CD8-positive, alpha-beta T cell (primary cell): ENCODE measurements at regions of chr10 and their contacts with region 1.

Region 1: GRCh38 chr10:119750391-119751230 is 24.8 kb downstream of the INPP5F start:
- DNase-seq: peak; percentile 6 to 74 (median 53)
- ATAC-seq: peak; percentile 95
- H3K4me3 ChIP-seq: no peak overlapping the region
- H3K4me3 Mint-ChIP-seq: no peak overlapping the region
- H3K27ac ChIP-seq: no peak overlapping the region
- H3K27ac Mint-ChIP-seq: no peak overlapping the region
- H3K4me1 ChIP-seq: no peaks in the 10 kb centered on the region
- H3K4me1 Mint-ChIP-seq: peaks cover 4% of the 10 kb centered on the region
- H3K27me3 ChIP-seq: no peaks in the 10 kb centered on the region
- H3K27me3 Mint-ChIP-seq: no peaks in the 10 kb centered on the region
- CTCF ChIP-seq: peak; percentile 77

Region 2: DNA sequence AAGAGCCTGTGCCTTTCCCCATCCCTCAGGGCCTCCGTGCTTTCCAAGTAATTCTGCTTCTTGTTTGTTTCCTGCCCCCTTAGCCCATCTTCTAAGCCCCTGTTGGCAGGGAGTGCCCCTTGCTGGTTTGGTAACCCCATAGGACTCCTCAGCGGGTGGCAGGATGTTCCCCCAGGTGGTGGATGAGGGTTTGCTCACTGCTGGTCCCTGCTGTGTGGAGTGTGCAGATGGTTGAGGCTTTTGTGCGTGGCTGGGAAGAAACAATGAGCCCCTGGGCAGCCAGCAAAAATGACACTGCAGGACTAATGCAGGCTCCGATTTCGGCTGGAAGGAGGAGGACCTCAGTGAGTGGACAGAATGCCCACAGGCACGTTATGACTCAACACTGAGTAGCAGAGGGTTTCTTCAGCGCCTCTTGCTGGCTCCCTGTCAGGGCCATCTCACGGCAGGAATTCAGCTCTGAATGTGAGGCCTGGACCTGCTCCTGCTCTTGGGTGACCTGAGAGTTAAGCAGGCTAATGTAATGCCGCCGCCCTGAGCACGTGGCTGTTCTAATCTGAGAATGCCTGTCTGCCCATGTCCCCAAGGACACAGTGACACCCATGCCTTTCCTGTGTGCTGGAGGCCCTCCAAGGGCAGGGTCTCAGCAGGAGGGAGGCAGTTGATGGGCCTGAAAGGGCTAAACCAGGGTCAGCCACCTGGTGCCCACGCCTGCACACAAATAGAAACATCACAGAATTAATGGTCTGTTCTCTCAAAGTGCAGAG is 82.9 kb before region 1 on chr10:
- CTCF ChIA-PET with region 1: no interaction called
- POLR2A ChIA-PET with region 1: no interaction called
- intact Hi-C with region 1: no loop called
- DNase-seq: peak in 1 of 9 experiments; percentile 18
- ATAC-seq: no peak
- H3K4me3 ChIP-seq: no peak overlapping the region
- H3K4me3 Mint-ChIP-seq: no peak overlapping the region
- H3K27ac ChIP-seq: no peak overlapping the region
- H3K27ac Mint-ChIP-seq: no peak overlapping the region
- H3K4me1 ChIP-seq: peaks cover 18% of the 10 kb centered on the region
- H3K4me1 Mint-ChIP-seq: peaks cover 23% of the 10 kb centered on the region
- H3K27me3 ChIP-seq: no peaks in the 10 kb centered on the region
- H3K27me3 Mint-ChIP-seq: no peaks in the 10 kb centered on the region
- CTCF ChIP-seq: no peak

Region 3: DNA sequence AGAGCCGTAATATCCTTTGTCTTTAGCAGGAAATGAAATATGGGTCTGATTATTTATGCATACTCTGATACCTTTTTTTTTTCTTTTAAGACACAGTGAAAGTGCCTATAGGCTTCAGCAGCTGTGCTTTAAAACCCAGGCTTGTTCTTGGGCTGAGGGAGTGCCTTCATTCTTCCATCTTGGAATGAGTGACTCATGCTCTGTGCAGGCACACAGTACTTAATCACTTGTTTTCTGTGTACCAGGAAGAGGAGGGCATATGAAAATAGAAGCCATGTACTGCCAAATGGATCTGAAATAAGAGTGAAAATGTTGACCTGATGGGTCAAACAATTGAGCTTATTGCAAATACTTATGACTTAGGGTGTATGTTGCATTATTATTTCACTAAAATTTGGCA is 12.8 kb before region 1 on chr10:
- CTCF ChIA-PET with region 1: interaction called, 17 read pairs
- POLR2A ChIA-PET with region 1: no interaction called
- intact Hi-C with region 1: no loop called
- DNase-seq: no peak
- ATAC-seq: peak; percentile 65
- H3K4me3 ChIP-seq: no peak overlapping the region
- H3K4me3 Mint-ChIP-seq: no peak overlapping the region
- H3K27ac ChIP-seq: no peak overlapping the region
- H3K27ac Mint-ChIP-seq: no peak overlapping the region
- H3K4me1 ChIP-seq: peaks cover 10% of the 10 kb centered on the region
- H3K4me1 Mint-ChIP-seq: peaks cover 19% of the 10 kb centered on the region
- H3K27me3 ChIP-seq: no peaks in the 10 kb centered on the region
- H3K27me3 Mint-ChIP-seq: no peaks in the 10 kb centered on the region
- CTCF ChIP-seq: no peak

Region 4: GRCh38 chr10:119762805-119763798 is 12.5 kb after region 1 on chr10:
- CTCF ChIA-PET with region 1: interaction called, 10 read pairs
- POLR2A ChIA-PET with region 1: no interaction called
- intact Hi-C with region 1: no loop called
- DNase-seq: no peak
- ATAC-seq: no peak
- H3K4me3 ChIP-seq: no peak overlapping the region
- H3K4me3 Mint-ChIP-seq: no peak overlapping the region
- H3K27ac ChIP-seq: no peak overlapping the region
- H3K27ac Mint-ChIP-seq: no peak overlapping the region
- H3K4me1 ChIP-seq: no peaks in the 10 kb centered on the region
- H3K4me1 Mint-ChIP-seq: peaks cover 7% of the 10 kb centered on the region
- H3K27me3 ChIP-seq: no peaks in the 10 kb centered on the region
- H3K27me3 Mint-ChIP-seq: no peaks in the 10 kb centered on the region
- CTCF ChIP-seq: no peak

Region 5: GRCh38 chr10:119919826-119920225 is 169.2 kb after region 1 on chr10:
- CTCF ChIA-PET with region 1: no interaction called
- POLR2A ChIA-PET with region 1: no interaction called
- intact Hi-C with region 1: loop called in 1 of 2 experiments (anchors 5 kb)
- DNase-seq: no peak
- ATAC-seq: no peak
- H3K4me3 ChIP-seq: no peak overlapping the region
- H3K4me3 Mint-ChIP-seq: no peak overlapping the region
- H3K27ac ChIP-seq: no peak overlapping the region
- H3K27ac Mint-ChIP-seq: no peak overlapping the region
- H3K4me1 ChIP-seq: no peaks in the 10 kb centered on the region
- H3K4me1 Mint-ChIP-seq: no peaks in the 10 kb centered on the region
- H3K27me3 ChIP-seq: no peaks in the 10 kb centered on the region
- H3K27me3 Mint-ChIP-seq: no peaks in the 10 kb centered on the region
- CTCF ChIP-seq: no peak

Region 6: DNA sequence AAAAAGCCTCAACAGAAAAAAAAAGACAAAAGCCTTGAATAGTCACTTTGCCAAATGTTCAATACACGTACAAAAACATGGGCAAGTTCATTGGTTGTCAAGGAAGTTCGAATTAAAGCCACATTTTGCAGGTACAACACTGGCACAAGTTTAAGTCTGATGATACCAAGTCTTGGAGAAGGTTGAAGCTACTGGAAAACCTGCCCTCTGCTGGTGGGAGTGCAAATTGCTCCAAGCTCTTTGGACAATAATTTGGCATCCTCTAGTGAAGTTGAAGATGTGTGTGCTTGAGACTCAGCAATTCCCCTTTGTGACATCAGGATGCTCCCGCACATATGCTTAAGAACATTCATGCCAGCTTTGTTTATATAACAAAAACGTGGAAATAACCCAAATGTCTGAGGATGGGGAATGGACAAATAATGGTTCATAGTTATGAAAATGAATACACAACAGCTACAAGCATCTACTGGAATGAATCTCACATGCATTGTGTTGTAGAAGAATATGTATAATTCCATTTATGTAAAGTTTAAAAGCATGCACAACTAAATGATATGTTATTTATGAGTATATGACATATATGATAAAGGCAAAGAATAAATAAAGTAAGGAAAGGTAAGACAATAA is 586.4 kb after region 1 on chr10:
- CTCF ChIA-PET with region 1: interaction called, 5 read pairs
- POLR2A ChIA-PET with region 1: no interaction called
- intact Hi-C with region 1: loop called (anchors 1 kb)
- DNase-seq: peak; percentile 7 to 57 (median 43)
- ATAC-seq: no peak
- H3K4me3 ChIP-seq: no peak overlapping the region
- H3K4me3 Mint-ChIP-seq: no peak overlapping the region
- H3K27ac ChIP-seq: no peak overlapping the region
- H3K27ac Mint-ChIP-seq: no peak overlapping the region
- H3K4me1 ChIP-seq: no peaks in the 10 kb centered on the region
- H3K4me1 Mint-ChIP-seq: no peaks in the 10 kb centered on the region
- H3K27me3 ChIP-seq: no peaks in the 10 kb centered on the region
- H3K27me3 Mint-ChIP-seq: peaks cover 17% of the 10 kb centered on the region
- CTCF ChIP-seq: peak; percentile 62

Region 7: DNA sequence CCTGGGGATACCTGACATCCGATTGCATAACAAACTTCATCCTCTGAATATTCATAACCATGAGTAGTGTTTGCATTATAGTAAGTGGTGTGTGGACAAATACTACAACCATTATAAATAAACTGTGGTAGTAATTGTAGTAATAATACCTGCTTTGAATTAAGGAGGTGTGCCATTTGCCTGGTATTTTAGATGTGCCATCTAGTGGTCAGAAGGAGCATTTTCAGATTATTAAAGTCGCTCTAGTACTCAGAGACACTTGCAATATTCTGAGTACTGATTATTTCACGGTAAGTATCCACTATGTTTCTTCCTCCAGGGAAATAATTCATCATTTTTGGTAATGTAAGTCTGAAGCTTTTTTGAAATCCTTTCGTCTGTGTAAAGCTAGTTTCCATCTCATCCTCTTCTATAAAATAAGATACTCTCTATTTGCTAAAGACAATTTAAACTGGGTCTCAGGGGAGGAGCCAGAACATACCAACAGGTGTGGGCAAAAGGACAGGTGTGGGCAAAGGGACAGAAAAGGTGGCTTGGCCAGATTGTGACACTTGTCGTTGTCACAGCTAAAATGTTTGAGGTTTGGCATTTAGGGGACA is 985.3 kb after region 1 on chr10:
- CTCF ChIA-PET with region 1: interaction called, 3 read pairs
- POLR2A ChIA-PET with region 1: no interaction called
- intact Hi-C with region 1: loop called in 1 of 2 experiments (anchors 5 kb)
- DNase-seq: peak in 2 of 9 experiments; percentile 18 to 31
- ATAC-seq: no peak
- H3K4me3 ChIP-seq: no peak overlapping the region
- H3K4me3 Mint-ChIP-seq: no peak overlapping the region
- H3K27ac ChIP-seq: no peak overlapping the region
- H3K27ac Mint-ChIP-seq: no peak overlapping the region
- H3K4me1 ChIP-seq: no peaks in the 10 kb centered on the region
- H3K4me1 Mint-ChIP-seq: no peaks in the 10 kb centered on the region
- H3K27me3 ChIP-seq: no peaks in the 10 kb centered on the region
- H3K27me3 Mint-ChIP-seq: peaks cover 3% of the 10 kb centered on the region
- CTCF ChIP-seq: peak; percentile 67